GM10248 (cell line): ENCODE measurements at regions of chr11 and their contacts with region 1.

Region 1: DNA sequence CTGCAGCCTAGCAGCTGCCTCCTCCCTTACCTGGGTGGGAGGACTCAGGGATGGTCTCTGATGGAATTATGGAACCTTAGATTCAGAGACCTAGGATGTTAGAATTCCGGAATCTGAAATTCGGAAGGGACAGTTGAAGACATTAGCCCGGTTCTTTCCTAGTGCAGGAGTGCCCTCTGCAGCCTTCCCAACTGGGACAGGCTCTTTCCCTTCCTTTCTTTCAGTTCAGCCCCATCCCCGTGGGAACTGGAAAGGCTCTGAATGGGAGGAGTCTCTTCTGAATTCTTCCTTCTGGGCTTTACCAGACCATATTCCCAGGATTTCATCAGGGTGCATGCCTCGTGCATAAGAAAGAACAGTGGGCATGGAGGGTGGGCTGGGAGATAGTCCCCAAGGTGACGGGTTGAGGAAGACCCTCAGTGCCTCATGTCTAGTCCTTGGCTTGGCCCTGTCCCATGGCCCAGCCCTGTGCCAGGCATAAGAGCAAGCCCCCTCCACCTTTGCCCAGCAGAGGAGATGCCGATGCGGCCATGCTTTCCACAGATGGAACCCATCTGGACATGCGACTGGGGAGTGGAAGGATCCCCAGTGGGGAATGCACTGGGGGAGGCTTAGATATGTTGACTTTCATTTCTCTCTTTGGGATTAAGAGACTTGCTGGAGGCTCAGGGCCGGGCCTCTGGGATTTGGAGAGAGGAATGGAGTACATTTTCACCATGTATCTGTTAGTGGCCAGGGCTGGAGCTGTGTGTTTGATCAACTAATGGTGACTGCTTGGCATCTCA is 14.4 kb downstream of the DNAJB13 start:
- DNase-seq: no peak
- CTCF ChIP-seq: no peak

Region 2: DNA sequence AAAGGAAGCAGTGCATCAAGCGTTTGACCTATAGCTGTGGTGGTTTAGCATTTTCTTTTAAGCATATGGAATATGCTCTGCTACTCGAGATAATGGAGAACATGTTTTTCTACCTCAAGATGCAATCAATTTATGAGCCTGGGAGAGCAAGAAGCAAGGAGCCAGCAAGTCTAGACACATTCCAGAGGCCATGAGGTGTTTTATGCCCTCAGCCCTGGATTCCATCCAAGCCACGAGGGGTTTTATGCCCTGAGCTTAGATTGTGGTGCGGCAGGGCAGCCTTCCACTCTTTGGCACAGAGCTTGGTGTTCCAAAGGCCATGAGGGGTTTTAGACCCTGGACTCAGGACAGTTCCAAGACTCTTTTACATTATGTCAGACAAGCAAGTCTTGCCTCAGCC is 26.2 kb before region 1 on chr11:
- CTCF ChIA-PET with region 1: interaction called, 16 read pairs
- POLR2A ChIA-PET with region 1: no interaction called
- DNase-seq: no peak
- CTCF ChIP-seq: no peak

Region 3: DNA sequence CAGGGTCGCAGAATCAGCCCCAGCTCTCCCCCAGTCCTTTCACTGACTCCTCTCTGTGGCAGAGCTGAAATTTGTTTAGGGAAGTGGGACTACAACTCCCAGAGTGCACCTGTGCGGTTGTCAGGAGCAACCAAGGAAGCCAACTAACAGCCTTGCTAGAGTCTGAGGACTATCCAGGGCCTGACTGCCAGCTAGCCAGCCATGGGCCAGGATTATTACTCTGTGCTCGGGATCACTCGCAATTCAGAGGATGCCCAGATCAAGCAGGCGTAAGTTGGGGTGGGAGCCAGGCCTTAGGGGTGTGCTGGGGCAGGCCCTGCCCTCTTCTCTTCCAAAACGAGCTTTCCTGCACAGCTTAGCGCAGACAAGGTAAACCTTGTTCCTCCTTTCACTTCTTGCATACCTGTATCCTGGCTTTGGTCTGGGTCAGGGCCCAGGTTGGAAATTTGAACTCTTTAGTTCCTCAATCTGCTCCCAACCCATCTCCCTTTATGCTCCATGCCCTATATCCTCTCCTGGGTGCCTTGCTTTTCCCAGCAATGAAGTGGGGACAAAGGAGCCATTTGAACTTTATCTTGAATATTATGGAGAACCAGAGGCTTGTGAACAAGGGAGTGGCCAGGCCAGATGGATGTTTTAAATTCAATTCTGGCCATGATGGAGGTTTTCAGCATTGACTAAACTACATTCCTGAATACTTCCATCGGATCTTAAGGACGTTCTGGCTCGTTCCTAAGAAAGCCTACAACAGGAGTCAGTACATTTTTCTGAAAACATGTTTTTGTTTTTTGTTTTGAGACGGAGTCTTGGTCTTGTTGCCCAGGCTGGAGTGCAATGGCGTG is 14.2 kb before region 1 on chr11 and contains the start of gene DNAJB13:
- CTCF ChIA-PET with region 1: interaction called, 15 read pairs
- POLR2A ChIA-PET with region 1: no interaction called
- DNase-seq: peak; percentile 88
- CTCF ChIP-seq: no peak

Region 4: DNA sequence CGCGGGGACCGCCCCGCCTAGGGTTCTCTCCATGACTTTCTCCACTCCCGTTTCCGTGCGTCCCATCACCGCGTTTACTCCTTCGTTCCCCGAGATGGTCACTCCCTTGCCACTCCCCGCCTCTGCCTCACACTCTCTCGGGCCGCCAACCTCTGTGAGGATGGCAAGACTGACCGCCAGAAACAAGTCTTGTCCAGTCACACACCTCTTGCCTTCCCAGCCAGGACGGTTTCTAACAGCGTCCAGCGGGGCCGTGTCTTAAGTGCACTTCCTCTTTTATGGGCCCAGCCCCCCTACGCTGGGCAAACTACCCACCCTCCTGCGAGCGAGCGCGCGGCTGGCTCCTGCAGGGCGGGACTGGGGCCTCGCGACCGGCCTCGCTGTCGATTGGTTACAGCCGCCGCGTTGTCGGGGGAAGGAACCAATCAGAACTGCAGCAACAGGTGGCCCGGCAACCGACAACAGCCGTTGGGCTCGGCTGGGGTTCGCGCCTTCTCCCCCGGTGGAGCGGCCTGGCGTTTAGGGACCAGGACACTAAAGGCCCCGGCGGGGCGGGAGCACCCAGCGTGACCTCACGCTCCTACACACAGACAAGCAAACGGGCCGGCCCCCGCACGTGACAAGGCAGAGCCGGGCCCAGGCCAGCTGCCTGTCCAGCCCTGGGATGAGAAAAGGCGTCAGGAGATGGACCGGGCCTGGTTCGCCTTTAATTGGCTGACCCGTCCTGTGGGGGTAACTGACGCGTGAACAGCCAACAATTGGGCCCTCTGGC is 17.9 kb after region 1 on chr11:
- CTCF ChIA-PET with region 1: interaction called, 49 read pairs
- POLR2A ChIA-PET with region 1: interaction called, 14 read pairs
- DNase-seq: peak; percentile 97
- CTCF ChIP-seq: no peak

Region 5: GRCh38 chr11:74090701-74091100 is 125.4 kb after region 1 on chr11:
- CTCF ChIA-PET with region 1: no interaction called
- POLR2A ChIA-PET with region 1: no interaction called
- DNase-seq: no peak
- CTCF ChIP-seq: no peak

Region 6: DNA sequence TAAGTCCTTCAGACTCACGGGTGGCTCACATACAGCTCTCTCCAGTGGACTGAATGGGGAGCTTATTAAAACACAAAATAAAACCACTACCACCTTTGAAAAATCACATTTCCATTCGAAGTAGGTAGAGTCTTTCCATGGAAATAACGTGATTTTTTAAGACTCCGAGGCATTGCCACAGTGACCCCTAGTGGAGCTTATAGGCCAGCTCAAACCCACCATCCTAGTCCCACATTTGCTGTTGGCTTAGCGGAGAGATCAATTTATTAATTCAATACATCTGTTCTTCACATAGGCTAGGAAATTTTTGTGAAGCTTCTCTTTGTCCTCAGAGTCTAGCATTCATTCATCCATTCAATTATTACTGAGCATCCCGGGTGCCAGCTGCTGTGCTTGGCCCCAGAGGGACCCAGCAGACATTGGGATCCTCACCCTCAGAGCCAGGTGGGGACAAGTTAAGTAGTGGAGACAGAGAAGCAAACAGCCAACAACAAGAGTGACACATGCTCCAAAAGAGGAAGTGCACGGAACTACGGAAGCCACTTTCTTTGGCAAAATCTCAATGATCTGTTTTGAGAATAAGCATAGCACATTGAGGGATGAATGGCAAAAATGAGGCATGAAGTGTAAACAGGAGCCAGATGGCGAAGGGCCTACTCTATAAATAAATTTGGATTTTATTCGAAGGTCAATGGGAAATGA is 356.4 kb after region 1 on chr11:
- CTCF ChIA-PET with region 1: interaction called, 15 read pairs
- POLR2A ChIA-PET with region 1: no interaction called
- DNase-seq: no peak
- CTCF ChIP-seq: peak; percentile 50